Naive thymus-derived CD4-positive, alpha-beta T cell (primary cell): ENCODE measurements at regions of chr1 and their contacts with region 1.

Region 1: DNA sequence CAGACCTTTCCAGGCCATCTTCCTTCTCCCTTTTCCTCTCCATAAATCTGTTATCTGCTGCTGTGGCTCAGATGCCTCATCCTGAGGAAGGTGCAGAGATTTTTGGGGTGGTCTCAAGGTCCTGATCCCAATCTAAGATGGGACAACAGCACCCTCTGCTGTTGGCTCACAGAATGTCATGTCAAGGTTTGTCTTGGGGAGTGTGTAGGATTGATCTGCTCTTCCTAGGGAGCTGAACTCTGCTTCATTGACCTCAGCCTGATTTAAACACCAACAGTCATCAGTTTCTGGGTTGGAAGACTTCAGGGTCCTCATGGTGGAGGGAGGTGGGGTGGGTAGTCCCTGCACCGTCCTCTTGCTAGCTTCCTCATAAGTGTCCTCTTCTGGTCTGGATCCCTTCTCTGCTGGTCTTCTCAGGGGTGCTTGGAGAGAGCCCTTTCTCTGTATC is 62.8 kb upstream of the LAX1 start:
- DNase-seq: peak; percentile 21 to 73 (median 54)
- ATAC-seq: peak; percentile 77
- H3K4me3 ChIP-seq: no peak overlapping the region
- H3K4me3 Mint-ChIP-seq: no peak overlapping the region
- H3K27ac ChIP-seq: no peak overlapping the region
- H3K27ac Mint-ChIP-seq: peak overlapping the region; percentile 58 to 92 (median 76)
- H3K4me1 ChIP-seq: no peaks in the 10 kb centered on the region
- H3K4me1 Mint-ChIP-seq: peaks cover 3 to 25% (median 12%) of the 10 kb centered on the region in 7 donors
- H3K27me3 ChIP-seq: no peaks in the 10 kb centered on the region
- H3K27me3 Mint-ChIP-seq: no peaks in the 10 kb centered on the region

Region 2: GRCh38 chr1:203402629-203403337 is 299.4 kb before region 1 on chr1:
- CTCF ChIA-PET with region 1: no interaction called
- POLR2A ChIA-PET with region 1: no interaction called
- intact Hi-C with region 1: no loop called
- DNase-seq: no peak
- ATAC-seq: peak; percentile 55
- H3K4me3 ChIP-seq: no peak overlapping the region
- H3K4me3 Mint-ChIP-seq: no peak overlapping the region
- H3K27ac ChIP-seq: no peak overlapping the region
- H3K27ac Mint-ChIP-seq: no peak overlapping the region
- H3K4me1 ChIP-seq: no peaks in the 10 kb centered on the region
- H3K4me1 Mint-ChIP-seq: peaks cover 0 to 2% (median 0%) of the 10 kb centered on the region in 7 donors
- H3K27me3 ChIP-seq: no peaks in the 10 kb centered on the region
- H3K27me3 Mint-ChIP-seq: peaks cover 26 to 44% (median 31%) of the 10 kb centered on the region in 5 donors

Region 3: DNA sequence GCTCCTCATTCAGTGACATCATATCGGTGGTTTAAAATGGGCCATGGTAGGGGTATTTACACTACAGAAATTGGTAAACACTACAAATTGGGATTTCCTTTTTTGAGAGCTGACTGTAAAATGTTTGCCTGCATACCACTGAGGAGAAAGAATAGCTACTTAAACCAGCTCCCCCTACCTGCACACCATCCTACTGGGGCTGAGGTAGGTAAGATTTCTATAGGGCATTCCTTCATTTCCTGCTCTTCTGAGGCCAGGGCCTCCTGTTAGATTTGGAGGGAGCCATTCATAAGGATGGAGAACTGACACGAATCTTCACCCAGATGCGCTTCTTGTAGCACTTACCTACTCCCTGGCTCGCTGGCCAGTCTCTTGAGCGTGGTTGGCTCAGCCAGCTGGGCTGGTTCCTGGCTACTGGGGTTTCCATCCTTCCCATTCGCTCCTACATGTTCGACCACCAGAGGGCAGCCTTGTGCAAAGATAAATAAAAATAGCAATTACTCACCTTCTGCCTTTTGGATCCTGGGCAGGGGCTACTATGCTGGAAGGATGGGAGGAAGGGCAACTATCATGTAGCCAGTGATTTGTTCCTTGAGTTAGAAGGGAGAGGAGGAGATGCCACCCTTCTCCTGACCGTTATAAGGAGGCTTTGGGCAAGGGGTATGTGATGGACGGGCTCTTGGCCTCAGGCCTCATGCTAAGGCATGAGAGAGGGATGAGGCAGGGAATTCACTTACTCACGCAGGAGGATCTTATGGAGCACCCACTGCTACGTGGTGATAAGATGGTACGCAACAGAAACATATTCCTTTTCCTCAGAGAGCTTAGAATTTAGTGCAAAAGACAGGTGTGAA is 197.5 kb before region 1 on chr1:
- CTCF ChIA-PET with region 1: interaction called, 125 read pairs
- POLR2A ChIA-PET with region 1: interaction called, 3 read pairs
- intact Hi-C with region 1: loop called (anchors 1 kb)
- DNase-seq: peak; percentile 44 to 76 (median 64)
- ATAC-seq: peak; percentile 69
- H3K4me3 ChIP-seq: no peak overlapping the region
- H3K4me3 Mint-ChIP-seq: no peak overlapping the region
- H3K27ac ChIP-seq: no peak overlapping the region
- H3K27ac Mint-ChIP-seq: peak overlapping the region in 2 of 9 donors; percentile 7 to 38
- H3K4me1 ChIP-seq: no peaks in the 10 kb centered on the region
- H3K4me1 Mint-ChIP-seq: peaks cover 0 to 12% (median 8%) of the 10 kb centered on the region in 7 donors
- H3K27me3 ChIP-seq: no peaks in the 10 kb centered on the region
- H3K27me3 Mint-ChIP-seq: peaks cover 0 to 20% (median 0%) of the 10 kb centered on the region in 5 donors

Region 4: DNA sequence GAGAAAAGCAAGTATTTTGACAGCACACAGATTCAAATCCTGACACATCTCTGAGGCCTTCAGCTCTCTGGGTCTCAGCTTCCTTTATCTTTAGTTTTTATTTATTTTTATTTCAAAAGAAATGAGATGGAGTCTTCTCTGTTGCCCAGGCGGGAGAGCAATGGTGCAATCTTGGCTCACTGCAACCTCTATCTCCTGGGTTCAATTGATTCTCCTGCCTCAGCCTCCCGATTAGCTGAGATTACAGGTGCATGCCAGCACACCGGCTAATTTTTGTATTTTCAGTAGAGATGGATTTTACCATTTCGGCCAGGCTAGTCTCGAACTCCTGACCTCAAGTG is 94.7 kb before region 1 on chr1:
- CTCF ChIA-PET with region 1: interaction called, 3 read pairs
- POLR2A ChIA-PET with region 1: interaction called, 8 read pairs
- intact Hi-C with region 1: loop called in 1 of 2 experiments (anchors 1 kb)
- DNase-seq: no peak
- ATAC-seq: no peak
- H3K4me3 ChIP-seq: no peak overlapping the region
- H3K4me3 Mint-ChIP-seq: peak overlapping the region in 5 of 10 donors; percentile 57 to 81 (median 72)
- H3K27ac ChIP-seq: no peak overlapping the region
- H3K27ac Mint-ChIP-seq: peak overlapping the region in 4 of 9 donors; percentile 51 to 93 (median 89)
- H3K4me1 ChIP-seq: peaks cover 11 to 21% of the 10 kb centered on the region in 2 donors
- H3K4me1 Mint-ChIP-seq: peaks cover 21 to 64% (median 33%) of the 10 kb centered on the region in 7 donors
- H3K27me3 ChIP-seq: no peaks in the 10 kb centered on the region
- H3K27me3 Mint-ChIP-seq: peaks cover 0 to 2% (median 0%) of the 10 kb centered on the region in 5 donors

Region 5: DNA sequence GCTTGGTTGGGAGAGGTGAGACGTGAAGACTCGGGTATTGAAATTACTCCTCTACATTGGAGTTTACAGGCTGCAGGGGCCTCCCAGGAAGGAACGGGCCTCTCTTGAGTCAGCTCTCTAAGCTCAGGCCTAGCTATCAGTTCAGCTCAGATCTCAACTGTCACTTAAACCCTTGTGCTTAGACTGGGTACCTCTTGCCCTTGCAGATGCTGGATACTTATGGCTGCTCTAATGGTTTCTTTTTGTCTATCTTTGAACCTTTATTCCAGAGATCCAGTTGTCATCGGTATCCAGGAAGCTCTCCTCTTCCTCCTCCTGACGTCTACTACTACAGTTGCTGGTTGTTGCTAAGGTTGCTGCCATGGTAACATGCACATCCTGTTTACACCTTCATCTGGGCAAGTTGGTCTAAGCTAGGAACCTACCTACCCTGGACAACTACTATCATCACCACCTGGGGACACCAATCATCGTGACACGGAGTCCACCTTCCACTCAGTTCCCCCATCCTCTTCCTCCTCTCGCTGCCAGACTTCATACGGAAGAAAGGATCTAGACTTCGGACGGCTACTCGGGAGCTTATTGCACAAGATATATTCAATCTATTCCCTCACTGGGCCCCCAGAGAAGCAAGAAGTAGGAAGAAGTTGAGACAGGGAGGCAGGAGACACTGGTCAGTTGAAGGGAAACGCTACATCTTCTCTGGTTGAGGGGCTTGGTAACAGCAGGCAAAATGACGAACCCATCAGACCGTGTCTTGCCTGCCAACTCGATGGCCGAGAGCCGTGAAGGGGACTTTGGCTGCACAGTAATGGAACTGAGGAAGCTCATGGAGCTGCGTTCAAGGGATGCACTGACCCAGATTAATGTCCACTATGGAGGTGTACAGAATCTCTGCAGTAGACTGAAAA is 19.4 kb before region 1 on chr1:
- CTCF ChIA-PET with region 1: interaction called, 46 read pairs
- POLR2A ChIA-PET with region 1: interaction called, 3 read pairs
- intact Hi-C with region 1: no loop called
- DNase-seq: peak; percentile 26 to 89 (median 80)
- ATAC-seq: peak; percentile 97
- H3K4me3 ChIP-seq: no peak overlapping the region
- H3K4me3 Mint-ChIP-seq: peak overlapping the region; percentile 19 to 72 (median 54)
- H3K27ac ChIP-seq: peak overlapping the region; percentile 67
- H3K27ac Mint-ChIP-seq: peak overlapping the region; percentile 82 to 96 (median 95)
- H3K4me1 ChIP-seq: peaks cover 24 to 26% of the 10 kb centered on the region in 2 donors
- H3K4me1 Mint-ChIP-seq: peaks cover 32 to 57% (median 51%) of the 10 kb centered on the region in 7 donors
- H3K27me3 ChIP-seq: no peaks in the 10 kb centered on the region
- H3K27me3 Mint-ChIP-seq: no peaks in the 10 kb centered on the region

Region 6: GRCh38 chr1:204031098-204031710 is 329.1 kb after region 1 on chr1:
- CTCF ChIA-PET with region 1: no interaction called
- POLR2A ChIA-PET with region 1: no interaction called
- intact Hi-C with region 1: no loop called
- DNase-seq: no peak
- ATAC-seq: no peak
- H3K4me3 ChIP-seq: no peak overlapping the region
- H3K4me3 Mint-ChIP-seq: no peak overlapping the region
- H3K27ac ChIP-seq: no peak overlapping the region
- H3K27ac Mint-ChIP-seq: no peak overlapping the region
- H3K4me1 ChIP-seq: no peaks in the 10 kb centered on the region
- H3K4me1 Mint-ChIP-seq: peaks cover 0 to 2% (median 0%) of the 10 kb centered on the region in 7 donors
- H3K27me3 ChIP-seq: no peaks in the 10 kb centered on the region
- H3K27me3 Mint-ChIP-seq: peaks cover 5 to 31% (median 12%) of the 10 kb centered on the region in 5 donors

Region 7: GRCh38 chr1:204128964-204129896 is 427.1 kb after region 1 on chr1:
- CTCF ChIA-PET with region 1: no interaction called
- POLR2A ChIA-PET with region 1: no interaction called
- intact Hi-C with region 1: loop called in 1 of 2 experiments (anchors 2 kb)
- DNase-seq: peak; percentile 19 to 70 (median 48)
- ATAC-seq: peak; percentile 84
- H3K4me3 ChIP-seq: no peak overlapping the region
- H3K4me3 Mint-ChIP-seq: peak overlapping the region in 5 of 10 donors; percentile 13 to 47 (median 24)
- H3K27ac ChIP-seq: no peak overlapping the region
- H3K27ac Mint-ChIP-seq: peak overlapping the region in 1 of 9 donors; percentile 48
- H3K4me1 ChIP-seq: no peaks in the 10 kb centered on the region
- H3K4me1 Mint-ChIP-seq: peaks cover 0 to 12% (median 9%) of the 10 kb centered on the region in 7 donors
- H3K27me3 ChIP-seq: no peaks in the 10 kb centered on the region
- H3K27me3 Mint-ChIP-seq: no peaks in the 10 kb centered on the region